Lower leg skin (tissue), 4 donors: ENCODE measurements at regions of chr2 and their contacts with region 1.

Region 1: GRCh38 chr2:65834771-65835475 is 402.5 kb upstream of the SPRED2 start:
- DNase-seq: no peak
- H3K4me3 ChIP-seq: no peak overlapping the region
- CTCF ChIP-seq: no peak
- POLR2A ChIP-seq: no peak

Region 2: DNA sequence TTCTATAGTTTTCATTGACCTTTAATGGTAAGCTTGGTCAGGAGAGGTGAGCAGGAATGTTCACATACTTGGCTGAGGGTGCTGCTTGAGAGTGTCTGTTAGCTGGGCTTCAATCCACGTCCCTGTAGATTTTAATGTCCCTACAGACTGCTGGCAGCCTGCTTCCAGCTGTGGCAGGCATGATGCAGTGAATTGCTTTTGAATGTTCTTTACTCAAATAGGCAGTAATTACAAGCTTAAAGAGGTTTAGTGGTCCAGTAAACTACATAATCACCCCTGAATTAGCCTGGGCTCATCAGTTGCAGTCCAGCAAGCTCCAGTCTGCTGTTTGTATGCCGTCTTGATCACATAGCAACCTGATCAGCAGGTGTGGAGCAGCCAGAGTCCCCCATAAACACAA is 702.1 kb after region 1 on chr2:
- intact Hi-C with region 1: loop called (anchors 10 kb)
- DNase-seq: no peak
- H3K4me3 ChIP-seq: no peak overlapping the region
- CTCF ChIP-seq: no peak
- POLR2A ChIP-seq: no peak